Vagina (tissue), 2 donors: ENCODE measurements at regions of chr5 and their contacts with region 1.

Region 1: DNA sequence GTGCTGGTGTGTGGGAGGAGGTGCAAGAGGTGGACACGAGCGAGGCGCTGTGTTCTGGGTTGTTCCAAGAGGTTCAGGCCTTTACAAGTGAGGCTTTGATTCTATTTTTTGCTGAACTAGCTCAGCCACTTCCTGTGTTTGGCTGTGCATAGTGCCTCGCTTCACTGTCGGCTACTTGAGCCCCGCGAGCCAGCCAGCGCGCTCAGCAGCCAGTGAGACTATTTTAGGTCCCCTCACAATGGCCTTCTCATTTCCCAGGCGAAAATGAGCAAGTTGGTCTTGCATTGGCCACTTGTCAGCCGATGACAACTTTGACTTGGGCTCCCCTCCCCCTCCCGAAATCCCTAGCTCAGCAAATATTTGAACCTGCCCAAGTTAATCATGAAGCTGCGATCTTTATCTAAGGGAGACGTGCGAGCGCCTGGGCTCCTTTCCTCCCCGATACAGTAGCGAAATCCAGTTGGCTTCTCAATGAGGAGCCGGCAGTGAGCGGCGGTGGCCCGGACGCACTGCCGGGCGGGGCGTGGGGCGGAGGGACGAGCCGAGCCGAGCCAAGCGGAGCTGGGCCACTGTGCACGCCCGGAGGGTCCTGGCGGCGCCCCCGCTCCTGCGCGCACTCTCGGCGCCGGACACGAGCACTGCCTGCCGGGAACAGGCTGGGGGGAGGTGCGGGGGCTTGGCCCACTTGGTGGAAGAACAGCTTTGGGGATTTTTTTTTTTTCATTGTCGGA is 72.6 kb downstream of the PIK3R1 start:
- DNase-seq: no peak
- H3K4me3 ChIP-seq: peak overlapping the region; percentile 45 to 65
- H3K27ac ChIP-seq: peak overlapping the region; percentile 79
- H3K4me1 ChIP-seq: peaks cover 98% of the 10 kb centered on the region
- H3K27me3 ChIP-seq: no peaks in the 10 kb centered on the region
- CTCF ChIP-seq: no peak
- POLR2A ChIP-seq: no peak

Region 2: GRCh38 chr5:68320094-68320986 is 32.2 kb after region 1 on chr5:
- intact Hi-C with region 1: no loop called
- DNase-seq: peak in 1 of 2 donors; percentile 87
- H3K4me3 ChIP-seq: no peak overlapping the region
- H3K27ac ChIP-seq: no peak overlapping the region
- H3K4me1 ChIP-seq: peaks cover 14% of the 10 kb centered on the region
- H3K27me3 ChIP-seq: no peaks in the 10 kb centered on the region
- CTCF ChIP-seq: no peak
- POLR2A ChIP-seq: no peak

Region 3: GRCh38 chr5:68450232-68450852 is 162.2 kb after region 1 on chr5:
- intact Hi-C with region 1: loop called (anchors 1 kb)
- DNase-seq: no peak
- H3K4me3 ChIP-seq: no peak overlapping the region
- H3K27ac ChIP-seq: peak overlapping the region; percentile 21
- H3K4me1 ChIP-seq: peaks cover 29% of the 10 kb centered on the region
- H3K27me3 ChIP-seq: no peaks in the 10 kb centered on the region
- CTCF ChIP-seq: no peak
- POLR2A ChIP-seq: no peak

Region 4: GRCh38 chr5:68962757-68963484 is 674.8 kb after region 1 on chr5:
- intact Hi-C with region 1: loop called (anchors 5 kb)
- DNase-seq: no peak
- H3K4me3 ChIP-seq: peak overlapping the region in 1 of 2 donors; percentile 19
- H3K27ac ChIP-seq: peak overlapping the region; percentile 69
- H3K4me1 ChIP-seq: peaks cover 12% of the 10 kb centered on the region
- H3K27me3 ChIP-seq: no peaks in the 10 kb centered on the region
- CTCF ChIP-seq: peak; percentile 64 to 74 (median 68)
- POLR2A ChIP-seq: no peak